Mammary epithelial cell (primary cell): ENCODE measurements at regions of chr11 and their contacts with region 1.

Region 1: GRCh38 chr11:96054870-96055705 is 131.2 kb upstream of the MTMR2 start:
- DNase-seq: peak; percentile 35
- H3K4me3 ChIP-seq: no peak overlapping the region
- H3K27ac ChIP-seq: no peak overlapping the region
- H3K4me1 ChIP-seq: peaks cover 33% of the 10 kb centered on the region
- H3K27me3 ChIP-seq: no peaks in the 10 kb centered on the region
- CTCF ChIP-seq: peak; percentile 58 to 67

Region 2: GRCh38 chr11:95835768-95836488 is 219.2 kb before region 1 on chr11:
- CTCF ChIA-PET with region 1: interaction called, 4 read pairs
- dilution Hi-C with region 1: no loop called
- in situ Hi-C with region 1: no loop called
- intact Hi-C with region 1: loop called (anchors 5 kb)
- DNase-seq: peak; percentile 81
- H3K4me3 ChIP-seq: no peak overlapping the region
- H3K27ac ChIP-seq: peak overlapping the region; percentile 14
- H3K4me1 ChIP-seq: no peaks in the 10 kb centered on the region
- H3K27me3 ChIP-seq: no peaks in the 10 kb centered on the region
- CTCF ChIP-seq: peak; percentile 93 to 98

Region 3: GRCh38 chr11:96122601-96123074 is 67.5 kb after region 1 on chr11:
- CTCF ChIA-PET with region 1: no interaction called
- dilution Hi-C with region 1: no loop called
- in situ Hi-C with region 1: no loop called
- intact Hi-C with region 1: loop called (anchors 1 kb)
- DNase-seq: peak; percentile 98
- H3K4me3 ChIP-seq: no peak overlapping the region
- H3K27ac ChIP-seq: peak overlapping the region; percentile 67
- H3K4me1 ChIP-seq: peaks cover 19% of the 10 kb centered on the region
- H3K27me3 ChIP-seq: no peaks in the 10 kb centered on the region
- CTCF ChIP-seq: peak; percentile 29 to 32

Region 4: GRCh38 chr11:96155627-96156378 is 100.7 kb after region 1 on chr11:
- CTCF ChIA-PET with region 1: interaction called, 6 read pairs
- dilution Hi-C with region 1: no loop called
- in situ Hi-C with region 1: no loop called
- intact Hi-C with region 1: loop called (anchors 2 kb)
- DNase-seq: peak; percentile 93
- H3K4me3 ChIP-seq: no peak overlapping the region
- H3K27ac ChIP-seq: peak overlapping the region; percentile 92
- H3K4me1 ChIP-seq: peaks cover 41% of the 10 kb centered on the region
- H3K27me3 ChIP-seq: no peaks in the 10 kb centered on the region
- CTCF ChIP-seq: peak in 1 of 2 donors; percentile 34

Region 5: DNA sequence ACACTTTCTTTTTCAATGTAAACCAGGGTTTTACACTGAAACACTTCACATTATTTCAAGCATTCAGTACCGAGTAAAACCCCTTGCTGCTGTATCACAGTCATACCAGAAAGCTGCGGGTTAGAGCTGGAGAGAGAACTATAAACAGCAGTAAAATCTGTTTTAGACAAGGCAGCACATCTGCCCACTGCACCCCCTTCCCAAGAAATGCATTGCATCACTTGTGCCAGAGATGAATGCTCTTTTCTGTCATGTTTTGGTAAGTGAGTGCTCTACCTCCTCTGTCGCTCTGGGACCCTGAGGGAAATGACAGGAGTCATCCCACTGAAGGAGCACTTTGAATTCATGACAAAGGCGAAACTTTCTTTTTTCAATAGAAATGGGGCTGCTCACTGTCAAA is 180.7 kb after region 1 on chr11:
- CTCF ChIA-PET with region 1: no interaction called
- dilution Hi-C with region 1: no loop called
- in situ Hi-C with region 1: no loop called
- intact Hi-C with region 1: loop called (anchors 5 kb)
- DNase-seq: no peak
- H3K4me3 ChIP-seq: no peak overlapping the region
- H3K27ac ChIP-seq: no peak overlapping the region
- H3K4me1 ChIP-seq: peaks cover 19% of the 10 kb centered on the region
- H3K27me3 ChIP-seq: no peaks in the 10 kb centered on the region
- CTCF ChIP-seq: no peak